ENCODE measurements at regions of chr6 and their contacts with region 1.

Region 1: GRCh38 chr6:41630946-41631345 is 7.3 kb upstream of the MDFI start:
- DNase-seq: no peak
- ATAC-seq: no peak
- H3K4me3 ChIP-seq: no peak overlapping the region
- H3K4me3 Mint-ChIP-seq: no peak overlapping the region
- H3K27ac ChIP-seq: no peak overlapping the region
- H3K27ac Mint-ChIP-seq: no peak overlapping the region
- H3K4me1 ChIP-seq: no peaks in the 10 kb centered on the region
- H3K4me1 Mint-ChIP-seq: peaks cover 0 to 9% (median 4%) of the 10 kb centered on the region in 3 donors
- H3K27me3 ChIP-seq: peaks cover 0 to 28% of the 10 kb centered on the region in 2 experiments
- H3K27me3 Mint-ChIP-seq: peaks cover 22 to 27% of the 10 kb centered on the region in 2 donors

Region 2: DNA sequence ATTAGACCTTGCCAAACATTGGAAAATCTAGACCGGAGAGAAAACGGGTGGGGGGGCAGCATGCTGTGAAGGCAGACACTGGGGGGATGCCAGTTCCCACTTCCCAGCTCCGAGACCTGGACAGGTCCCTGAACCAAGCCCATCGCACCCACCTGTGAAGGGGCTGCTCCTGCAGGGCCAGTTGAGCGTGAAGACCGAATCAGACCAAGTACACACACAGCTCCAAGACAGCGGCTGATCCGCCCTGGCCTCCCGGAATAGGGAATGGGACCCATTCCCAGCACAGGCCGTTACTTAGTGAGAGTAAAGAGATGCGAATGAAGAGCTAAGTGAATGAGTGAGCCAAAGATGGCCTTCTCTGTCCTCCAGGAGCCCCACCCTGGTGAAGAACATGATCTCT is 34.1 kb before region 1 on chr6:
- CTCF ChIA-PET with region 1: interaction called in 1 of 2 experiments, 10 read pairs
- POLR2A ChIA-PET with region 1: no interaction called
- DNase-seq: no peak
- ATAC-seq: no peak
- H3K4me3 ChIP-seq: no peak overlapping the region
- H3K4me3 Mint-ChIP-seq: no peak overlapping the region
- H3K27ac ChIP-seq: no peak overlapping the region
- H3K27ac Mint-ChIP-seq: no peak overlapping the region
- H3K4me1 ChIP-seq: peaks cover 0 to 5% of the 10 kb centered on the region in 2 experiments
- H3K4me1 Mint-ChIP-seq: no peaks in the 10 kb centered on the region
- H3K27me3 ChIP-seq: peaks cover 0 to 2% of the 10 kb centered on the region in 2 experiments
- H3K27me3 Mint-ChIP-seq: no peaks in the 10 kb centered on the region